Vagina (tissue), 2 donors: ENCODE measurements at regions of chr5 and their contacts with region 1.

Region 1: GRCh38 chr5:57173185-57174127 is at the start of gene GPBP1:
- DNase-seq: peak; percentile 99 to 100
- H3K4me3 ChIP-seq: peak within 1 kb of the TSS; percentile 92 to 93
- H3K27ac ChIP-seq: peak within 1 kb of the TSS; percentile 100
- H3K4me1 ChIP-seq: peaks cover 48% of the 10 kb centered on the region
- H3K27me3 ChIP-seq: no peaks in the 10 kb centered on the region
- CTCF ChIP-seq: no peak
- POLR2A ChIP-seq: peak; percentile 85 to 90
- total RNA-seq, gene GPBP1: 62.6 TPM

Region 2: DNA sequence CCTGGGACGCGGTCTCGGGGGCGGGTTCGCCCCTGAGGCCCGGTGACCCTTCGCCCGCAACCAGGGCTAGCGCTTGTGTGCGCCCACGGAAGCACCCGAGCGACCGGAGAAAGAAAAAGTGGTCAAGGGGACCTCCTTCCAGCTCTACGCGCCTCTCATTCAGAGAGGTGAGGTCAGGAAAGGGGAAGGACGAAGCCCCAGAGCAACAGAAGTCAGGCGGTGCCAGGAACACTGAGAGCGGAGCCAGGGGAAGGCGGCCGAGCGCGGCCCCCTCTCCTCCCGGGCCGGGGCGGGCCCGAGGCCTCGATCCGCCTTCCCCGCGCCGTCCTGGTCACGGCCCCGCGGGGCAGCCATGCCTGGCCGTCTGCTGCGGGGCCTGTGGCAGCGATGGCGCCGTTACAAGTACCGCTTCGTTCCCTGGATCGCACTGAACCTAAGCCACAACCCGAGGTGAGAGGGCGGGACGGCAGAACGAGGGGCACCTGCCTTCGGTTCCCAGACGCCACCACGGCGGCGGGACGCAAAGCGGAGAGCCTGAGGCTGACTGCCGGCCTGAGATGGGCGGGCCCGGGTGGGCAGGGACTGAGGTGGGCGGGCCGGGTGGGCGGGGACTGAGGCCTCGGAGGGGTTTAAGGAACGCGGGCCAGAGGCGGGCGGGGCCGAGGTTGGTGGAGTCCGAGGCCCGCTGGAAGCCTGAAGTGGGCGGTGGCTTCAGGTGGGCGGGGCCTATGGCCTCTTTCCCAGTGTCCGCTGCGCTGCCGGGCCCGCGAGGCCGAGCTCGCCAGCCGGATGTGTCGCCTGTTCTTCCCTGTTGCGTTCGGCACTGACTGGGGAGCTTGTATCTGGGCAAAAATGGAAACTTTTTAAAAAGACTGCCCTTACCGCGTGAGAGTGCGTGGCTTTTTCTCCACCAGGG is 263.9 kb before region 1 on chr5 and contains the start of gene SETD9:
- intact Hi-C with region 1: loop called (anchors 5 kb)
- DNase-seq: peak; percentile 96 to 97
- H3K4me3 ChIP-seq: peak within 1 kb of the TSS; percentile 60 to 72
- H3K27ac ChIP-seq: peak within 1 kb of the TSS; percentile 95
- H3K4me1 ChIP-seq: peaks cover 8% of the 10 kb centered on the region
- H3K27me3 ChIP-seq: no peaks in the 10 kb centered on the region
- CTCF ChIP-seq: no peak
- POLR2A ChIP-seq: peak in 1 of 2 donors; percentile 47
- total RNA-seq, gene SETD9: 2.7 TPM

Region 3: GRCh38 chr5:56951946-56952691 is 221.3 kb before region 1 on chr5 and contains the start of gene MIER3:
- intact Hi-C with region 1: loop called (anchors 5 kb)
- DNase-seq: no peak
- H3K4me3 ChIP-seq: peak within 1 kb of the TSS; percentile 85 to 92
- H3K27ac ChIP-seq: peak within 1 kb of the TSS; percentile 88
- H3K4me1 ChIP-seq: peaks cover 18% of the 10 kb centered on the region
- H3K27me3 ChIP-seq: no peaks in the 10 kb centered on the region
- CTCF ChIP-seq: no peak
- POLR2A ChIP-seq: no peak
- total RNA-seq, gene MIER3: 16.0 TPM

Region 4: GRCh38 chr5:57221049-57221568 is 47.7 kb after region 1 on chr5:
- intact Hi-C with region 1: loop called (anchors 10 kb)
- DNase-seq: no peak
- H3K4me3 ChIP-seq: no peak overlapping the region
- H3K27ac ChIP-seq: no peak overlapping the region
- H3K4me1 ChIP-seq: peaks cover 18% of the 10 kb centered on the region
- H3K27me3 ChIP-seq: no peaks in the 10 kb centered on the region
- CTCF ChIP-seq: peak; percentile 69 to 96 (median 85)
- POLR2A ChIP-seq: no peak